MCF 10A (cell line): ENCODE measurements at regions of chr1 and their contacts with region 1.

Region 1: GRCh38 chr1:182084487-182085316 is 23.2 kb upstream of the ZNF648 start:
- DNase-seq: peak; percentile 91
- H3K4me3 Mint-ChIP-seq: no peak overlapping the region
- H3K27ac Mint-ChIP-seq: no peak overlapping the region
- H3K4me1 Mint-ChIP-seq: peaks cover 27% of the 10 kb centered on the region
- H3K27me3 Mint-ChIP-seq: no peaks in the 10 kb centered on the region
- CTCF ChIP-seq: peak; percentile 98

Region 2: DNA sequence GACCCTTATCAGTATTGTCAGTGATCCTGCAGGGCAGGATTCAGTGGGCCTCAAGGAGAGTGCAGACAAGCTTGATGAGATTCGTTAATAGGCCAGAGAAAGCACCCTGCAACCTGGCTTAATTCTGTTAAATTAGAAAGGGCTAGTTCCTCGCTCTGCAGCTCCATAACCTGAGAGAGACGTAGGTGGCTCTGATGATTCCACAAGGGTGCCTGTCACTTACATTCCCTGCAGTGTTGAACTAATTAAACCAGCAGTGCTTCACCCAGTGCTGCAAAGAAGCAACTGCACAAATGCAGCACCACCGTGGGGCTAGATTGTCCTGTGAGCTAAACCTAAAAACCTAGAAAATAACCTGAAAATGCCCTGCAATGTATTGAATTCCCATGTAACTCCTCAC is 330.6 kb before region 1 on chr1:
- CTCF ChIA-PET with region 1: no interaction called
- POLR2A ChIA-PET with region 1: no interaction called
- intact Hi-C with region 1: no loop called
- DNase-seq: no peak
- H3K4me3 Mint-ChIP-seq: no peak overlapping the region
- H3K27ac Mint-ChIP-seq: no peak overlapping the region
- H3K4me1 Mint-ChIP-seq: no peaks in the 10 kb centered on the region
- H3K27me3 Mint-ChIP-seq: peaks cover 11% of the 10 kb centered on the region
- CTCF ChIP-seq: no peak

Region 3: DNA sequence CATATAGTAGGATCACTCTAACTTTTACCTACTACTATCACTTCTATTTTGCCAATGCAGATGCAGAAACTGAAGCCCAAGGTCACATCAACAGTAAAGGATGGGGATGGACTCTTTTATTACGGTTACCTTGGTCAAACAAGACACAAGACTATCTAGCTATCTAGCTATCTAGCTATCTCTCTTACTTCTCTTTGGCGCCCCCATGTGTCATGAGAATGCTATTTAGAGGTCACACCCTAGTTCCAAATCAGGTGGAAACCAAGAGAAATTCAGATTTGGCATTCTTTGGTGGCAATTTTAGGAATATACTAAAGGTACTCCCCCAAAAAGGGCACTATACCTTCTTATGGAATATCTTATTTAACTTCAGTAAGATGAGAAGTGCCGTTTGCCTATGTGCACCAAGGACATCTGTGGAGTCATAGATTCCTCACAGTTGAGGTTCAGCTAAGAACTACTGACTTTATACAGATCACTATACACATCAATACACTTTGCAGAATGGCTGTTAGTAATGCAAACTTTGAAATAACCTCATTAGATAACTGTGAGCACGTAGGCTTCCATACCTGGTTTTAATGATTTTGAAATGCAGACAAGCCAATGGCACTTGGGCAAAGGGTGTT is 29.9 kb before region 1 on chr1:
- CTCF ChIA-PET with region 1: interaction called, 11 read pairs
- POLR2A ChIA-PET with region 1: interaction called, 3 read pairs
- intact Hi-C with region 1: no loop called
- DNase-seq: peak; percentile 87
- H3K4me3 Mint-ChIP-seq: no peak overlapping the region
- H3K27ac Mint-ChIP-seq: no peak overlapping the region
- H3K4me1 Mint-ChIP-seq: peaks cover 6% of the 10 kb centered on the region
- H3K27me3 Mint-ChIP-seq: no peaks in the 10 kb centered on the region
- CTCF ChIP-seq: peak; percentile 73

Region 4: GRCh38 chr1:182185813-182186756 is 101.4 kb after region 1 on chr1:
- CTCF ChIA-PET with region 1: interaction called, 14 read pairs
- POLR2A ChIA-PET with region 1: interaction called, 3 read pairs
- intact Hi-C with region 1: no loop called
- DNase-seq: peak; percentile 91
- H3K4me3 Mint-ChIP-seq: peak overlapping the region; percentile 10
- H3K27ac Mint-ChIP-seq: peak overlapping the region; percentile 81
- H3K4me1 Mint-ChIP-seq: peaks cover 58% of the 10 kb centered on the region
- H3K27me3 Mint-ChIP-seq: no peaks in the 10 kb centered on the region
- CTCF ChIP-seq: no peak

Region 5: DNA sequence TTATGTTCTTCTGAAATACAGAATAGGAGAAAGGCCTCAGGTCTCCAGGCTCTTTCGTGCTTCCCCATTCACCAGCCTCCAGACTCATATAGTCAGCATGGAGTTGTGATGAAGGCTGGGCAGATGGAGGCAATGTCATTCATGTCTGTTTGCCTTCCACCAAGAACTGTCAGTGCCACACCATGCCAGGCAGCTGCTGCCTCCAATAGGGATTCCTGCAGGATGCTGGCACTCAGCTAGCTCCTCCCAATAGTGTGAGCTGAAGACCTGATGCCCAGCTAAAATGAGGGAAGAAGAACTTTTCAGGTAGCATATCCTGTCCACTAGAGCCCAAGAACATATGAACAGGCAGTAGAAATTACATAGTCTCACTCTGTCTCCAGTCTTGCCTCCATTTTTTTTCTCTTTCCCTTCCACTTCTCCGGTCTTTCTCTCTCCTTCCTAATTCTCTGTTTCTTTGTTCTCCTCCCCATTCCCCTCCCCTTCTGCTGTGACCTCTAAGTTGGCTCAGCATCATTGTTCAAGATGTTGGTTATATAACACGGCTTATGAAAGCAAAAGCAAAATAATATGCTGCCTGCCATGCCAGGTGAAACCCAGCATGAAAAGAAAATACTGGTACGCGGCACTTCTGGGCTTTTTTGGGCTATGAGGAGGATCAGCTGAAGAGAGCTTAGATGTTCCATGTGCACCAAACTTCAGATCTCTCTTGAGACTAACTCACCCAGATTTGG is 289.6 kb after region 1 on chr1:
- CTCF ChIA-PET with region 1: interaction called, 10 read pairs
- POLR2A ChIA-PET with region 1: interaction called, 43 read pairs
- intact Hi-C with region 1: no loop called
- DNase-seq: no peak
- H3K4me3 Mint-ChIP-seq: no peak overlapping the region
- H3K27ac Mint-ChIP-seq: no peak overlapping the region
- H3K4me1 Mint-ChIP-seq: peaks cover 7% of the 10 kb centered on the region
- H3K27me3 Mint-ChIP-seq: no peaks in the 10 kb centered on the region
- CTCF ChIP-seq: no peak

Region 6: GRCh38 chr1:182404781-182405180 is 320.1 kb after region 1 on chr1:
- CTCF ChIA-PET with region 1: interaction called, 450 read pairs
- POLR2A ChIA-PET with region 1: interaction called, 9 read pairs
- intact Hi-C with region 1: no loop called
- DNase-seq: no peak
- H3K4me3 Mint-ChIP-seq: no peak overlapping the region
- H3K27ac Mint-ChIP-seq: no peak overlapping the region
- H3K4me1 Mint-ChIP-seq: no peaks in the 10 kb centered on the region
- H3K27me3 Mint-ChIP-seq: no peaks in the 10 kb centered on the region
- CTCF ChIP-seq: no peak

Region 7: DNA sequence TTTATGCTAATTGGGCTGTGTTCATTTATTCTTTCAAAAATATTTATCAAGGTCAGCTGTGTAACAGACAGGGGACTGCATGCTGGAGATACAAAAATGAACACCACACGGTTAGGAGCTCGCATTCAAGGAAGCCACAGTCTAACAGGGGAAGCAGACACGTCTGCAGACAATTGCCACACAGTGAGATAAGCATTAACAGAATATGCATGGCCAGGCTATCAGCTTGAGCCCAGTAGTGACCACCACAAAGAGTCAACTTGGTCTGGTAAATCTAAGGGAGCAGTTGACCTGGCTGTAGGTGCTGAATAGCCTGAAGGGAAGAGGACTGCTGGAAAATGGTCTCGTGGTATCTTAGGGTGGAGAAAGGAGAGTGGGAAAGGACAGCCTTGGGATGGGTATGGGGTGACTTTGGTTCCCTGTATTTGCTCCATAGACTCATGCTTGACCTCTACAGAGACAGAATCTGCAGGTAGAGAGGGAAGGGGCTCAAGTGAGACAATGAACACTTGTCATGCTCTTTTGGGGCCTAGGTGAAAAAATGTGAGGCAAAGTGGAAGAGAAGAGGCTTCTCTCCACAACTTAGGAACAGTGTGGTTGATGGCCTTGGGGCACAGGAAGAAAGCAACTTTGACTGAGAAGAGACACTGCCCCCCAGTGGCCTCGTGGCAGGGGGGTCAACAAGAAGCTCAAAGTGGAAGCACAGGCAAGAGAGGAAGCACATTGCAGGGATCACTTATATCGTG is 697.3 kb after region 1 on chr1:
- CTCF ChIA-PET with region 1: interaction called, 34 read pairs
- POLR2A ChIA-PET with region 1: interaction called, 3 read pairs
- intact Hi-C with region 1: loop called (anchors 1 kb)
- DNase-seq: peak; percentile 82
- H3K4me3 Mint-ChIP-seq: no peak overlapping the region
- H3K27ac Mint-ChIP-seq: no peak overlapping the region
- H3K4me1 Mint-ChIP-seq: peaks cover 19% of the 10 kb centered on the region
- H3K27me3 Mint-ChIP-seq: no peaks in the 10 kb centered on the region
- CTCF ChIP-seq: peak; percentile 76